Lower leg skin (tissue), 4 donors: ENCODE measurements at regions of chr15 and their contacts with region 1.

Region 1: GRCh38 chr15:34065941-34066340 is 26.9 kb upstream of the AVEN start:
- DNase-seq: peak in 1 of 2 donors; percentile 75
- H3K4me3 ChIP-seq: no peak overlapping the region
- CTCF ChIP-seq: no peak
- POLR2A ChIP-seq: no peak

Region 2: GRCh38 chr15:33994005-33994615 is 71.8 kb before region 1 on chr15:
- intact Hi-C with region 1: no loop called
- DNase-seq: no peak
- H3K4me3 ChIP-seq: no peak overlapping the region
- CTCF ChIP-seq: no peak
- POLR2A ChIP-seq: no peak

Region 3: DNA sequence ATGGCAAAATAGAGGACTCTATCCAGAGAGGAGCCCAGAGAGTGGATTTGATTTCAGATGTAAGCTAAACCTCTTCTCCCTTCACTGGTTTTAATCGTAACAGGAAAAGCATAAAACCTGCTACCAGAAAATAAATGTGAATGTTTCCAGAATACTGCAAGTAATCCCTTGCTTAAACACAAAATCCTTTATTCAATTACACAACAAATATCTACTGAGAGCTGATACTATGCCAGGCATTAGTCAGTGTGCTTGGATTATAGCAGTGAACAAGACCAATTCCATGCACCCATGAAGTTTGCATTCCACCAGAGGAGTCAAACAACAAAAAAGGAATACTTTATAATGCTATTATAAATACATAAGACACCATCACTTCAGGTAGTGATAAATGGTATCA is 42.0 kb before region 1 on chr15:
- intact Hi-C with region 1: no loop called
- DNase-seq: no peak
- H3K4me3 ChIP-seq: no peak overlapping the region
- CTCF ChIP-seq: no peak
- POLR2A ChIP-seq: no peak

Region 4: DNA sequence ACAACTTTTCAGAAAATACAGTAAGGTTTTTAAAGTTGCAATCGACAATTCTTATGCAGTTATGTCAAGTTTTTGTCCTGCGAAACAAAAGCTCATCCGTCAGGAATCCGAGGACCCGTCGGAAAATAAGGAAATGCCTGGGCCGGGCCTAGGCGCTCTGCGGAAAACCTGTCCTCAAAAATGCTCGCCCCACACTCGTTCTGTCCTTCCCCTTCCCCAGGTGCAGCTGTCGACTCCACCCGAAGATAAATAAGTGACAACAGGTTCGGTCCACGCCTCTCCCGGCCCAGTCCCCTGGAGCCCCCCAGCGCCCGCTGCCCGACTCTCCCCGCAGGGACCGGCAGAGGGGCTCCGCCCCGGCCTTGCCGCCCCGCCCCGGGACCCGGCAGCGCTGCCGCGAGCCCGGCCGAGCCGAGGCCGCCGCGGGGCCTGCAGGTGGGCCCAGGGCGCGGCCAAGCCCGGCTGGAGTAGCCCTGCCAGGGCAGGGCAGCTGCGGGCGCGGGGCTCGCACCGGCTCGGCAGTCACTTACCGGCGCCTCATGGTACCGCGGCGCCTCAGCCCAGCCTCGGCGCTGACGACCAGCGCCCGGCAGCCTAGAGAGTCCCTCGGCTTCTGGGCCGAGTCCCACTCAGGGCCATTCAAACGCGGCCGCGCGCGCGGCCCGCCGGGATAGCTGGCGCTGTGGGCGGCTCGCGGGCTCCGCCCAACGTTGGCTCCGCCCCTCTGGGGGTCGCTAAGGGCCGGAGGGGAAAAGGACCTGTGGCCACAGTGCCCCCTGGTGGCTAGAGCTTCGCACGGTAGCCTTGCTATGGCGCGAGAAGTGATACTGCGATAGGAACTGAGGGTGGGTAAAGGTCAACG is 143.7 kb after region 1 on chr15 and contains the start of gene KATNBL1:
- intact Hi-C with region 1: loop called (anchors 5 kb)
- DNase-seq: peak; percentile 93 to 99
- H3K4me3 ChIP-seq: peak within 1 kb of the TSS; percentile 47
- CTCF ChIP-seq: peak in 1 of 3 donors; percentile 62
- POLR2A ChIP-seq: no peak
- total RNA-seq, gene KATNBL1: 25.7 to 42.8 (median 39.2) TPM

Region 5: GRCh38 chr15:34223904-34224596 is 158.1 kb after region 1 on chr15:
- intact Hi-C with region 1: no loop called
- DNase-seq: no peak
- H3K4me3 ChIP-seq: peak overlapping the region; percentile 79
- CTCF ChIP-seq: no peak
- POLR2A ChIP-seq: no peak